Panc1 (cell line): ENCODE measurements at regions of chr2 and their contacts with region 1.

Region 1: GRCh38 chr2:45370362-45370761 is 240.7 kb downstream of the SRBD1 start:
- DNase-seq: no peak
- ATAC-seq: no peak
- H3K4me3 ChIP-seq: no peak overlapping the region
- H3K27ac ChIP-seq: no peak overlapping the region
- H3K4me1 ChIP-seq: no peaks in the 10 kb centered on the region
- H3K27me3 ChIP-seq: no peaks in the 10 kb centered on the region
- CTCF ChIP-seq: no peak

Region 2: GRCh38 chr2:45354776-45355175 is 15.6 kb before region 1 on chr2:
- CTCF ChIA-PET with region 1: no interaction called
- POLR2A ChIA-PET with region 1: interaction called, 12 read pairs
- in situ Hi-C with region 1: no loop called
- intact Hi-C with region 1: no loop called
- DNase-seq: no peak
- ATAC-seq: no peak
- H3K4me3 ChIP-seq: no peak overlapping the region
- H3K27ac ChIP-seq: no peak overlapping the region
- H3K4me1 ChIP-seq: no peaks in the 10 kb centered on the region
- H3K27me3 ChIP-seq: no peaks in the 10 kb centered on the region
- CTCF ChIP-seq: no peak